GM12878 (cell line): ENCODE measurements at regions of chr1 and their contacts with region 1.

Region 1: GRCh38 chr1:151254217-151255213 is at the start of gene PSMD4:
- DNase-seq: peak; percentile 96
- ATAC-seq: peak; percentile 95
- H3K4me3 ChIP-seq: peak within 1 kb of the TSS; percentile 81
- H3K27ac ChIP-seq: peak within 1 kb of the TSS; percentile 87
- H3K4me1 ChIP-seq: peaks cover 2% of the 10 kb centered on the region; the same call in 1 of the 2 replicates
- H3K27me3 ChIP-seq: no peaks in the 10 kb centered on the region
- CTCF ChIP-seq: no peak
- EP300 ChIP-seq: no peak
- POLR2A ChIP-seq: peak; percentile 94
- RAD21 ChIP-seq: no peak
- polyA plus RNA-seq, gene PSMD4: 129 to 190 TPM

Region 2: DNA sequence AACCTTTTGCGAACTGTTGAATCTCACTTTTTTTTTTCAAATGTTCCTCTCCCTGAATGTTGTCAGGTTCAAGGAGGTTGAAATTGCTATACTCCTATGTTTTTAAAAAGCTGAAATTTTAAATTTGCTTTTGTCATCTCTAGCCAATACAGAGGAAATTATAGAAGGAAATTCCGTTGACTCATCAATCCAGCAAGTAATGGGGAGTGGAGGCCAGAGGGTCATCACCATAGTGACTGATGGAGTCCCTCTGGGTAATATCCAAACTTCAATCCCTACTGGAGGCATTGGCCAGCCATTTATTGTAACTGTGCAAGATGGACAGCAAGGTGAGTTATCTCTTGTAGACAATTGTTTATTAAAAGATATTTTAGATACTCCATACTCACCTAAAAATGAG is 147.6 kb before region 1 on chr1:
- CTCF ChIA-PET with region 1: interaction called, 12 read pairs
- POLR2A ChIA-PET with region 1: interaction called, 4 read pairs
- RAD21 ChIA-PET with region 1: interaction called, 41 read pairs
- SMC1A ChIA-PET with region 1: no interaction called
- in situ Hi-C with region 1: no loop called
- intact Hi-C with region 1: no loop called
- DNase-seq: no peak
- ATAC-seq: no peak
- H3K4me3 ChIP-seq: no peak overlapping the region
- H3K27ac ChIP-seq: no peak overlapping the region
- H3K4me1 ChIP-seq: no peaks in the 10 kb centered on the region
- H3K27me3 ChIP-seq: no peaks in the 10 kb centered on the region
- CTCF ChIP-seq: no peak
- EP300 ChIP-seq: no peak
- POLR2A ChIP-seq: no peak
- RAD21 ChIP-seq: no peak

Region 3: GRCh38 chr1:151189638-151190445 is 64.7 kb before region 1 on chr1 and contains the start of gene VPS72:
- CTCF ChIA-PET with region 1: interaction called, 70 read pairs
- POLR2A ChIA-PET with region 1: interaction called, 12 read pairs
- RAD21 ChIA-PET with region 1: interaction called, 13 read pairs
- SMC1A ChIA-PET with region 1: interaction called, 4 read pairs
- in situ Hi-C with region 1: no loop called
- intact Hi-C with region 1: no loop called
- DNase-seq: peak; percentile 72
- ATAC-seq: peak; percentile 92
- H3K4me3 ChIP-seq: peak within 1 kb of the TSS; percentile 76
- H3K27ac ChIP-seq: peak within 1 kb of the TSS; percentile 87
- H3K4me1 ChIP-seq: peaks cover 4% of the 10 kb centered on the region; the same call in 1 of the 2 replicates
- H3K27me3 ChIP-seq: no peaks in the 10 kb centered on the region
- CTCF ChIP-seq: no peak
- EP300 ChIP-seq: no peak; a peak in 1 of 4 replicates
- POLR2A ChIP-seq: peak; percentile 92
- RAD21 ChIP-seq: no peak
- polyA plus RNA-seq, gene VPS72: 6.7 to 9.0 TPM

Region 4: GRCh38 chr1:151198255-151199127 is 56.0 kb before region 1 on chr1 and contains the start of gene PIP5K1A:
- CTCF ChIA-PET with region 1: interaction called, 70 read pairs
- POLR2A ChIA-PET with region 1: interaction called, 8 read pairs
- RAD21 ChIA-PET with region 1: interaction called, 13 read pairs
- SMC1A ChIA-PET with region 1: interaction called, 7 read pairs
- in situ Hi-C with region 1: no loop called
- intact Hi-C with region 1: loop called (anchors 1 kb)
- DNase-seq: peak; percentile 93
- ATAC-seq: peak; percentile 92
- H3K4me3 ChIP-seq: peak within 1 kb of the TSS; percentile 98
- H3K27ac ChIP-seq: peak within 1 kb of the TSS; percentile 82
- H3K4me1 ChIP-seq: peaks cover 4% of the 10 kb centered on the region; the same call in 1 of the 2 replicates
- H3K27me3 ChIP-seq: no peaks in the 10 kb centered on the region
- CTCF ChIP-seq: no peak
- EP300 ChIP-seq: peak in 1 of 2 experiments; percentile 36; a peak in 1 of 4 replicates
- POLR2A ChIP-seq: peak; percentile 86
- RAD21 ChIP-seq: no peak
- polyA plus RNA-seq, gene PIP5K1A: 4.5 to 5.8 TPM

Region 5: DNA sequence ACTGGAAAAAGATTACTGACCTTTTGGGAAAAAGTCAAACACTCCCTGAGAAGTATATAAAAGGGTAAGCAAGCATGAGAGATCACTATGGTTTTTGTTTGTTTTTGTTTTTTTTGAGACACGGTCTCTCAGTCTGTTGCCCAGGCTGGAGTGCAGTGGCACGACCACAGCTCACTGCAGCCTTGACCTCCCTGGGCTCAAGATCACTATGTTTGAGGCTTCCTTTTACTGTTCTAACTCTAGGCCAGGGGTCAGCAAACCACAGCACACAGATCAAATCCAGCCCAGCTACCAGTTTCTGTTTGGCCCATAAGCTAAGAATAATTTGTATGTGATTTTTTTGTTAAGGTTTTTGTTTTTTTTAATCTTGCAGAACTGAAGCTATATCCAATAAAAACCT is 170.6 kb after region 1 on chr1:
- CTCF ChIA-PET with region 1: no interaction called
- POLR2A ChIA-PET with region 1: no interaction called
- RAD21 ChIA-PET with region 1: no interaction called
- SMC1A ChIA-PET with region 1: no interaction called
- in situ Hi-C with region 1: no loop called
- intact Hi-C with region 1: no loop called
- DNase-seq: no peak
- ATAC-seq: no peak
- H3K4me3 ChIP-seq: no peak overlapping the region
- H3K27ac ChIP-seq: no peak overlapping the region
- H3K4me1 ChIP-seq: no peaks in the 10 kb centered on the region
- H3K27me3 ChIP-seq: no peaks in the 10 kb centered on the region
- CTCF ChIP-seq: no peak
- EP300 ChIP-seq: no peak
- POLR2A ChIP-seq: no peak
- RAD21 ChIP-seq: no peak